Caco-2 (cell line): ENCODE measurements at regions of chr11 and their contacts with region 1.

Region 1: DNA sequence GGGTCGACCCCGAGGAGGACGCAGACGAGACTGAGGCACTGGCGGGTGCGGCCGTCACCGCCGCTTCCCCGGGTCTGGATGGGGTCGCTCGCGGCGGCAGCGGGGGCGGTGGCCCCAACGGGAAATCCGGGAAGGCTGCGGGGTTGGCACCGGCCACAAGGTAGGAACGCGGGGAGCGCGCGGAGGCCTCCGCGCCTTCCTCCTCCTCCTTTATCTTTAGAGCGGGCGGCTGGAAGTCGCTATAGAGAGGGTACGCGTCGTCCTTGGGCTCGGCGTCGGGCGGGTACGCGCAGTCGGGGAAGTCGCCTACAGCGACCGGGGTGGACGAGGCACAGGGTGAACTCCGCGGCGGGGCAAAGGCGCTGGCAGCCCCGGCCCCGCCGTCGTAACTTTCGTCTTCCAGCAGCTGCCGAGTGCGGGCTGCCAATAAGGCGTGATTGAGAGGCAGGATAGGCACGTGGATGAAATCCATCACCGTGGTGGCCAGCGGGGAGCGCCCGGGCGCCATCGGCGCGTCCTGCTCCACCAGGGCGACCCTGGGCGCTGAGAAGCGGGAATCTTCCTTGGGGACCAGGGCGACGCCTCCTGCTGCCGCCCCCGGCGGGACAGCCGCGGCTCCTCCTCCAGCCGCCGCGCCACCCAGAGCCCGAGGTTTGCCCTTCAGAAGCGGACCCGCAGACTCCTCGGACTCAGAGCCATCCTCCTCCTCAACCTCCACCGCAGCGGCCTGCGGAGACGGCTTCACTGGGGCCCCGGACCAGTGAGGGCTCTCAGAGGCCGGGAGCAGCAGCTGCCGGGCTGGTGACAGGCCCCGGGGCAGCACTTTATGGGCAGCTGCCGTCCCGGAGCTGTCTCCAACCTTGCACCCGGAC is 1.7 kb downstream of the PGR start:
- DNase-seq: peak; percentile 40 to 47
- H3K4me3 ChIP-seq: peak overlapping the region; percentile 18
- H3K4me3 Mint-ChIP-seq: peak overlapping the region; percentile 67
- H3K27ac Mint-ChIP-seq: no peak overlapping the region
- H3K4me1 ChIP-seq: peaks cover 12% of the 10 kb centered on the region
- H3K4me1 Mint-ChIP-seq: peaks cover 6% of the 10 kb centered on the region
- H3K27me3 ChIP-seq: peaks cover 20% of the 10 kb centered on the region
- H3K27me3 Mint-ChIP-seq: peaks cover 44% of the 10 kb centered on the region
- CTCF ChIP-seq: no peak

Region 2: DNA sequence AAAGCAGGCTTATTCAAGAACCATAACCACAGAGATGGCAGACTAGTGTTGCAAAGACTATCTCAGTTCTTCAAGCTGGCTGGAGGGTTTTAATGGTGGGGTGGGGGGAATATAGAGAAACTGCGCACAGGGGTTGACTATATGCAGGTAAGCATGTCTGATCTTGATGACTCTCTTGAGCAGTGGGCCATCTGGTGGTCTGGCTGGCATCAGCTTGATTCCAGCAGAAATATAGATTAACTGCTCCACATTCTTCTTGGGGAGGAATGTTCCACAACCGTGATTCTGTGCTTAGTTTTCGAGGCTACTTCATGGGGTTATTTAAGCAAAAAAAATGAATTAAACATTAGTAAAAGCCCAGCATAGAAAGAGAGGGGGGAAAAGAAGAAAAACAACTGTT is 160.5 kb after region 1 on chr11:
- CTCF ChIA-PET with region 1: no interaction called
- POLR2A ChIA-PET with region 1: no interaction called
- intact Hi-C with region 1: loop called (anchors 5 kb)
- DNase-seq: peak in 1 of 2 experiments; percentile 29
- H3K4me3 ChIP-seq: no peak overlapping the region
- H3K4me3 Mint-ChIP-seq: no peak overlapping the region
- H3K27ac Mint-ChIP-seq: no peak overlapping the region
- H3K4me1 ChIP-seq: no peaks in the 10 kb centered on the region
- H3K4me1 Mint-ChIP-seq: no peaks in the 10 kb centered on the region
- H3K27me3 ChIP-seq: no peaks in the 10 kb centered on the region
- H3K27me3 Mint-ChIP-seq: no peaks in the 10 kb centered on the region
- CTCF ChIP-seq: peak in 1 of 2 experiments; percentile 27

Region 3: DNA sequence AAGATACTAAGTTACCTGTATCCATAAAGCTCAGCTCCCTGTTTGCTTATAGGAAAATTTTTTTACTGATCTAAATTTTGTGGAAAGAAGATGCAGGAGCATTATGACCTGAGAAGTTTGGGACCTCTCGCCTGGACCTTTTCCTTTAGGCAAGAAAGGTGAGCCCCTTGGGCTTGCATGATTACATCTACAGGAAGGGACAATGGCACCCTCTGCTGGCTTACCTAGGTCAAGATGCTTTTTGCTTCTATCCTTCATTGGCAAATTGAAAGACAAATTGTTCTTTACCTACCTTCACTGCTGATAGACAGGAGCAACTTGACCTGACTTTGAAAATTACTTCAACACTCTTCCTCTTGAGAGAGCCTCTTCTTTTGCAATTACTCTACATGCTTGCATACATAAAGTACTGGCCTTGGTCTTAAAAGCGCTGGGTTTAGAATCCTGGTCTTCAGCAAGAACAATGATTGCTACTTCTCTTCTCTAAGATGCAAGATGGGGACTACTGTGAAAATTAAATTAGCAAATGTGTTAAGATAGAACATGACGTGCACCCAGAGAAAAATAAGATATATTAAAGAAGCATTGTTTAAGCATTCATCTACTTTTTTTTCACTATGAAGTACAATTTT is 308.7 kb after region 1 on chr11:
- CTCF ChIA-PET with region 1: no interaction called
- POLR2A ChIA-PET with region 1: no interaction called
- intact Hi-C with region 1: loop called (anchors 5 kb)
- DNase-seq: peak; percentile 79 to 80
- H3K4me3 ChIP-seq: no peak overlapping the region
- H3K4me3 Mint-ChIP-seq: no peak overlapping the region
- H3K27ac Mint-ChIP-seq: no peak overlapping the region
- H3K4me1 ChIP-seq: no peaks in the 10 kb centered on the region
- H3K4me1 Mint-ChIP-seq: no peaks in the 10 kb centered on the region
- H3K27me3 ChIP-seq: no peaks in the 10 kb centered on the region
- H3K27me3 Mint-ChIP-seq: no peaks in the 10 kb centered on the region
- CTCF ChIP-seq: peak; percentile 89 to 96